ENCODE measurements at regions of chr15 and their contacts with region 1.

Region 1: GRCh38 chr15:57732526-57733331 is 26.2 kb downstream of the POLR2M start:
- DNase-seq: peak; percentile 74
- ATAC-seq: peak; percentile 75
- H3K4me3 Mint-ChIP-seq: no peak overlapping the region
- H3K27ac Mint-ChIP-seq: no peak overlapping the region
- H3K4me1 Mint-ChIP-seq: peaks cover 15% of the 10 kb centered on the region; the same call in 1 of the 2 replicates
- H3K27me3 Mint-ChIP-seq: no peaks in the 10 kb centered on the region
- CTCF ChIP-seq: peak; percentile 82

Region 2: GRCh38 chr15:57720867-57721266 is 11.9 kb before region 1 on chr15:
- CTCF ChIA-PET with region 1: interaction called, 17 read pairs
- POLR2A ChIA-PET with region 1: no interaction called
- DNase-seq: no peak
- ATAC-seq: no peak
- H3K4me3 Mint-ChIP-seq: no peak overlapping the region
- H3K27ac Mint-ChIP-seq: no peak overlapping the region
- H3K4me1 Mint-ChIP-seq: no peaks in the 10 kb centered on the region
- H3K27me3 Mint-ChIP-seq: no peaks in the 10 kb centered on the region
- CTCF ChIP-seq: no peak

Region 3: DNA sequence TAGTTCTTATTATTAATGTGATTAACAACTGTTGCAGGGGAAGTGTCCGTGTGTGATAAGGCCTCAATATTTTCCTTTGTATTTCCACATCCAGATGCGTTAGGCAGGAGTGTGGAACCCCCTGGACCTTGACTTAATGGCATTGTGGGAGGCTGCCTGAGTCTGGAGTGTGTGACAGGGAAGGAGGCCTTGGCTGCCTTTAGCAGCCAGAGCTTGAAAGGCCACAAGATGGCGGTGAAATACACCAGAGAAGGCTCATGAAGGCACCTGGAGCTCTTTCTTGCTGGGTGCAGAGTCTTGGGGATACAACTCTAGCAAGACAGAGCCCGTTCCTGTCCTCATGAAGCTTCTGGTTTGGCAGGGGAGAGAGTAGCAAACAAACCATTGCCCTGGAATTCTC is 10.7 kb after region 1 on chr15:
- CTCF ChIA-PET with region 1: interaction called, 28 read pairs
- POLR2A ChIA-PET with region 1: no interaction called
- DNase-seq: peak; percentile 32
- ATAC-seq: peak; percentile 63
- H3K4me3 Mint-ChIP-seq: no peak overlapping the region
- H3K27ac Mint-ChIP-seq: no peak overlapping the region
- H3K4me1 Mint-ChIP-seq: peaks cover 27% of the 10 kb centered on the region
- H3K27me3 Mint-ChIP-seq: peaks cover 2% of the 10 kb centered on the region; the same call in 1 of the 2 replicates
- CTCF ChIP-seq: no peak

Region 4: GRCh38 chr15:57861036-57861638 is 128.4 kb after region 1 on chr15:
- CTCF ChIA-PET with region 1: interaction called, 25 read pairs
- POLR2A ChIA-PET with region 1: no interaction called
- DNase-seq: no peak
- ATAC-seq: no peak; the same call in 1 of the 2 replicates
- H3K4me3 Mint-ChIP-seq: no peak overlapping the region
- H3K27ac Mint-ChIP-seq: no peak overlapping the region
- H3K4me1 Mint-ChIP-seq: no peaks in the 10 kb centered on the region
- H3K27me3 Mint-ChIP-seq: no peaks in the 10 kb centered on the region; the same call in 1 of the 2 replicates
- CTCF ChIP-seq: peak; percentile 69

Measured in WTC11 (cell line).